Left cardiac atrium (tissue), 4 donors: ENCODE measurements at regions of chr17 and their contacts with region 1.

Region 1: GRCh38 chr17:56373981-56374833 is 219.3 kb upstream of the NOG start:
- DNase-seq: no peak
- ATAC-seq: no peak

Region 2: GRCh38 chr17:56431736-56432135 is 57.5 kb after region 1 on chr17:
- intact Hi-C with region 1: loop called in 1 of 2 experiments (anchors 10 kb)
- DNase-seq: no peak
- ATAC-seq: no peak